Left cardiac atrium (tissue), 4 donors: ENCODE measurements at regions of chr6 and their contacts with region 1.

Region 1: DNA sequence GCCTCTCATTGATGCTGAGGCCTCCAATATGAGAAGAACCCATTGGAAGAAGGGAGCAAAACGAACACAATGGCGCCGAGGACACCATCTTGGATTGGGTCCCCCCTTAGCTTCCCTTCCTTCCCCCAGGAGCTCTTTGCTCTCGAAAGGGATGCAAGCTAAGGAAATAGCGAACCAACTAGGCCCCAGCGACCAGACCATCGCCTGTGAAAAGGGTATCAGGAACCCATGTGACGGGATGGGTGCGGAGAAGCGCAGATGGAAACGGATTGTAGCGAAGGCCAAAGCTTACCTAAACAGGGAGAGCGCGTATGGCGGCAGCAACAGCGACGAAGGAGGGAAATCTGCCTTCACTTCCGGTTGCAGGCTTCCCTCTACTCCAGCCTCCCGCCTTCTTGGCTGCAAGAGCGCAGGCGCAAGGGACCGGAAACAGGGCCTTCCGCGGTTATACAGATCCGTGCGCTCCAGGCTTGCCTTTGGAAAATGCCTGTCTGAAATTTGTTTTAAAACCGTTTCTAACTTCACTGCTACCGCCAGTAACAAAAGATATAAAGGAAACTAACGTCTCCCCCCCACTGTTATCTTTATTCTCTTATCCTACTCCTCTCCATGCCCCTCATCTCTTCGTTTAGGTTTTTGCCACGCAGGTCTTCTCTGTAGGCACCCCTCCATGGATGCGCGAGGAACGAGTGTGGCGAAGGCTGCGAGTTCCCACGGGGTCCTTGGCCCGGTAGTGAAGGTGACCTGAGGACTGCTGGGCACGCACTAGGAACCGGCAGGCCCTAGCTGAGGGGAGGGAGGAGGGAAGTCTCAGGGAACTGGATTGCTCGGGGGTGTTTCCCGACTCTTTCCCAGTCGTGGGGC is at the start of gene DDX39B:
- DNase-seq: peak; percentile 96
- ATAC-seq: peak; percentile 93 to 94
- total RNA-seq, gene DDX39B: 188 to 224 TPM

Region 2: DNA sequence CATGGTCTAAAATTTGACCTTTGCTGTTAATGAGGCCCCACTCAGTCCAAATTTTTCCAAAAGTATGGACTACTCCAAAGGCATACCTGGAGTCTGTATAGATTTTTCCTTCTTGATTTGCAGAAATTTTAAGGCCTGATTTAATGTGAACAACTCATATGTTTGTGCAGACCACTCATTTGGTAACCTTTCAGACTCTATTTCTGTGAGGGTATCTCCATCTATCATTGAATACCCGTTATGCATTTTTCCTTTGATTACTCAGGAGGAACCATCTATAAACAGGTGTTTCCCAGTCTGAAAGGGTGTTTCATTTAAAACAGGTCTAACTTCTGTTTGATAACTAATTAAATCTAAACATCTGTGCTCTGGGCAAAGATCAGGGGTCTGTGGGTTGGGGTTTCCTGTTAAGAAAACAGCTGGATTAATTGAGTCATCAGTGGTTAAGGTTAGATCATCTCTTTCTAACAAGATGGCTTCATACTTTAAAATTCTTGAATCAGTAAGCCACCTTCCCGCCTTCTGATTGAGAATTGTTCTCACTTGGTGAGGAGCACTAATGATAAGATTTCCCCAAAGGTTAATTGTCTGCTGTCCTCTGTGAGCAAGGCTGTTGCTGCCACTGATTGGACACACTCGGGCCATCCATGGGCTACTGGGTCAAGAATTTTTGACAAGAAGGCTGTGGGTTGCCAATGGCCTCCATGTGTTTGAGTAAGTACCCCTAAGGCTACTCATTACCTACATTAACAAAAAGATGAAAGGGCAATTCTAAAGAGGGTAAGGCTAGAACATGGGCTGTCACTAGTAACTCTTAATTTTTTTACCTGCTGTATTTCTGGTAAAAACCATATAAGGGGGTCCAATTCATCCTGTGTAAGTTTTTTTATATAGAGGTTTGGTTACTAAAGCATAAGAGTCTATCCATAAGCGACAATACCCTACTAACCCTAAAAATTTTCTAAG is 209.0 kb before region 1 on chr6:
- intact Hi-C with region 1: no loop called
- DNase-seq: no peak
- ATAC-seq: no peak

Region 3: DNA sequence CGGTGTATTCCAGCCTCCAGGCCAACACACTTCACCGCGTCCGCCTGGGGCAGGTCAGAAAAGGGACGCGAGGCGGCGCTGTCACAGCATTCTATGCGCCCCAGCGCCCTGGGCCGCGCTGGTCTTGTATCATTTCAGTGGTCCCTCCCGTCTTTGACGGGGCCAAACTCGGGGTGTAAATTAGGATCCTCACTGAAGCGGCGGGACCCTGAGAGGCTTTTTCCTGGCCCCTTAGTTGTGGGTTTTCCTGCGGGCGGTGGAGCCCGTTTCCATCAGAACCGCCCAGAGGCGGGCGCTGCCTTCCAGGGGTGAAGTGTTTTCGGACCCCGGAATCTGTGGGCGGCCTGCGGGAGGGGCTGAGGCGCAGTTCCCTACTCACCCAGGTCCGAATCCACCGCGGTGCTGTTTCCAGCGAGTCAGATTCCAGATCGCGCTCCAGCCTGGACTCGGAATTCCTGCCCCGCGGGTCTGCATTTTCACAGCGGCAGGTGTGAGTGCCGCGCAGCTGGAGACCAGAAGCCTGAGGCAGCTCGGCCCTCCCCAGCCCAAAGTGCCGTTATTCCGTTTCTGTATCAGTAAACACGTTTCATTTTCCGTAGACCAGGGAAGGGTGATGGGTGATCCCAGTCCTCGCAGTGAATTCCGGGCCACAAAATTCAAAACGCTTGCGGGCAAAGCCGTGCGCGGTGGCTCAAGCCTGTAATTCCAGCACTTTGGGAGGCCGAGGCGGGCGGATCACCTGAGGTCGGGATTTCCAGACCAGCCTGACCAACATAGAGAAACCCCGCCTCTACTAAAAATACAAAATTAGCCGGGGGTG is 47.8 kb before region 1 on chr6:
- intact Hi-C with region 1: loop called in 1 of 2 experiments (anchors 5 kb)
- DNase-seq: peak; percentile 86
- ATAC-seq: peak; percentile 76 to 82